ENCODE measurements at regions of chr2 and their contacts with region 1.

Region 1: DNA sequence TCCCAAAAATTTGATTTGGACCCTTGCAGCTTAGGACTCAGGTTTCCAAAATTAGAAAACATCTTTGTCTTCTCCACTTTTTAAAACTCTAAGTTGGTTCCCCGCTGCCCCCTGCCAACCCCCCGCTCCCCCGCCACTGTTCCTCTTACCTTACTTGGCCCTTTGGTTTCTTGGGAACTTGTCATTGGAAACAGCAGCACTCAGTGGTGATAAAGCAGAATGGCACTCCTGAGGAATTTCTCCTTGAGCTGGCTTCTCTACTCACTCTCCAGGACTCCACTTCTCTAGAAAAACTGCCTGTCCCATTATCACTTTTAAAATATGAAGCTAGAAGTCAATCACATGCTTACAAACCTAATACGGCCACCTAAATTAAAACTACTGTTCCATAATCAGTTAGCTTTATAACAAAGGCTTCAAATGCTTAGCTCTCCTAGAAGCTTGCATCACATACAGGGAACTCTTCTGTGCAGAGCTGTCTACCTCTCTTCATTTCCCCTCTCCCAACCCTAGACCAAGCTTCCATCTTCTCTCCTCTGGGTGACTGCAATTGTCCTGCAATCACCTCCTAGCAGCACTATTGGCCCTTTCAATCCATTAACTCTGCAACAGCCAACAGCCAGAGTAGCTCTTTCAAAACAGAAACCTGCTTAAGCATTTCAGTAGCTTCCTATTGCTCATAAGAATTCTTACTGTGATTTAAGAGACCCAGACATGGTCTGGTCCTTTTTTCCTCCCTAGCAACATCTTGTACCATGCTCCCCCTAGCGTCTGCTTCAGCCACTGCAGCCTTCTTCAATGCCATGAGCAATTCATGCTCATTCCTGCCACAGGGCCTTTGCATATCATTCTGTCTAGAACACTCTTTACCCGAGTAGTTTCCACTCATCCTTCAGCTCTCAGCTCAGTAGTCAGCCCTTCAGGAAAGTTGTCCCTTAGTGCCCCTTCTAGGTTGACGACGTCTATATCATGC is 15.2 kb upstream of the PLEKHM3 start:
- DNase-seq: peak; percentile 71
- ATAC-seq: peak; percentile 73
- H3K4me3 ChIP-seq: no peak overlapping the region
- H3K4me3 Mint-ChIP-seq: no peak overlapping the region
- H3K27ac ChIP-seq: no peak overlapping the region
- H3K27ac Mint-ChIP-seq: no peak overlapping the region
- H3K4me1 ChIP-seq: no peaks in the 10 kb centered on the region
- H3K4me1 Mint-ChIP-seq: no peaks in the 10 kb centered on the region
- H3K27me3 ChIP-seq: peaks cover 0 to 4% (median 0%) of the 10 kb centered on the region in 4 experiments
- H3K27me3 Mint-ChIP-seq: no peaks in the 10 kb centered on the region
- CTCF ChIP-seq: peak; percentile 75

Region 2: GRCh38 chr2:208057108-208057507 is 16.6 kb after region 1 on chr2:
- CTCF ChIA-PET with region 1: interaction called, 11 read pairs
- POLR2A ChIA-PET with region 1: no interaction called
- intact Hi-C with region 1: no loop called
- DNase-seq: no peak
- ATAC-seq: no peak
- H3K4me3 ChIP-seq: no peak overlapping the region
- H3K4me3 Mint-ChIP-seq: no peak overlapping the region
- H3K27ac ChIP-seq: no peak overlapping the region
- H3K27ac Mint-ChIP-seq: no peak overlapping the region
- H3K4me1 ChIP-seq: no peaks in the 10 kb centered on the region
- H3K4me1 Mint-ChIP-seq: no peaks in the 10 kb centered on the region
- H3K27me3 ChIP-seq: no peaks in the 10 kb centered on the region
- H3K27me3 Mint-ChIP-seq: peaks cover 22% of the 10 kb centered on the region
- CTCF ChIP-seq: no peak